ENCODE measurements at regions of chr6 and their contacts with region 1.

Region 1: GRCh38 chr6:108492131-108492766 is 68.5 kb upstream of the FOXO3 start:
- DNase-seq: peak; percentile 57 to 68 (median 64)
- H3K4me3 ChIP-seq: no peak overlapping the region
- H3K27ac ChIP-seq: no peak overlapping the region
- H3K4me1 ChIP-seq: no peaks in the 10 kb centered on the region
- H3K27me3 ChIP-seq: no peaks in the 10 kb centered on the region

Region 2: GRCh38 chr6:108250240-108250866 is 241.9 kb before region 1 on chr6:
- CTCF ChIA-PET with region 1: interaction called, 32 read pairs
- POLR2A ChIA-PET with region 1: no interaction called
- DNase-seq: peak; percentile 49 to 66 (median 65)
- H3K4me3 ChIP-seq: no peak overlapping the region
- H3K27ac ChIP-seq: no peak overlapping the region
- H3K4me1 ChIP-seq: peaks cover 8 to 31% (median 23%) of the 10 kb centered on the region in 4 experiments
- H3K27me3 ChIP-seq: no peaks in the 10 kb centered on the region

Region 3: DNA sequence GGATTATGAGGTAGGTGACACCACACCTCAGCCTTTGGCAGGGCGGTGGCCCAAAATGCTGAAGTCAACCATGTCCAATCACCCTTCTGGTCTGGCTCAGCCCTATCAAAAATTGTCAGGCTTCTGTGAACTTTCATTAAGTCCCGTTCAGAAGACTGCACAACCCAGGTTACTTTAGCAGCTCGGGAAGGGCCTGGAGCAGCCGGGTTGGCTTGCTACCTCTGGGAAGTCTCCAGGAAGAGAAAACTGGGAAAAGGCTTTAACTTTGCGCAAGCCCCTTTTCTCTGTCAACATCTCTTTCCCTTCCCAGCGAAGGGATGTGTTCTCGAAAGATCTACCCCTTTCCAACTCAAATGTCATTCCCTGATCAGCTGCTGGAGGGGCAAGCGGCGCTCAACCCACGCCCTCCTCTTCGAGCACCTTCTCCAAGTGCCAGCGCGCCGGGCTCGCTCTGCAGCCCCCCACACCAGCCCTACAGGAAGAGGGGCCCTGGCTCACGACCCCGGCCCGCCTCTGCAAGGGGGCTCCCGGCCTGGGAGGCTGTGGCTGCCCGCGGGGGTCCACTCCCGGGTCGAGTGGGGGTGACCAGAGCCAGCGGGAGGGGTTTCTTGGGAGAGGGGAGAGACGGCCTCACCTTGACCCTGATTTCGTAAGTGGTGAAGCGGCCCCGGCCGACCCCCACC is 232.0 kb before region 1 on chr6:
- CTCF ChIA-PET with region 1: interaction called, 13 read pairs
- POLR2A ChIA-PET with region 1: no interaction called
- DNase-seq: peak; percentile 25 to 63 (median 42)
- H3K4me3 ChIP-seq: peak overlapping the region; percentile 72 to 99 (median 91)
- H3K27ac ChIP-seq: peak overlapping the region; percentile 70 to 91
- H3K4me1 ChIP-seq: peaks cover 5 to 31% (median 22%) of the 10 kb centered on the region in 4 experiments
- H3K27me3 ChIP-seq: no peaks in the 10 kb centered on the region

Region 4: DNA sequence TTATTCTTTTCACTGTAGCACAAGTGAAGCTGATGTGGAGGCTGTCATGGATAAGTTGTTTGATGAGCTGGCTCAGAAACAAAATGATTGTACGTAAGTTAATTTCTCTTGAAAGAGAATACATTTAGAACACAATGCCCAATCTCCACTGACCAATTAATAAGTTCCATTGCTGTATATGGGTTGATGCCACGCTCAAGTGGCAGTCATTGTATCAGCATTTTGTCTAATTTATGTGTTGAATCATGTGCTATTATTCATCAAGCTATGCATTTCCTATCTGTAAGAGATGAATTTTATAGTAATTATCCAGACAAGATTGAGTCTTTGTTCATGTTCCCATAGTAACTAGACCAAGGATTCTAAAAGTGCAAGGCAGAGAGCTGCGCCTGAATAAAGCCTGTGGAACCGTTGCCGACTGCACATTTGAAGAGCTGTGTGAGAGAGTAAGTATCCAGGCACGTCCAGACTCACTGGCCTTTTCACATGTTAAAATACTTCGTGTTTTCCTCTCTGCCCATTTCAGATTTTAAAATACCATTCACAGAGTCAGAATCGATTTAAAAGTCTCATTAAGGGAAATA is 15.3 kb before region 1 on chr6:
- CTCF ChIA-PET with region 1: interaction called, 19 read pairs
- POLR2A ChIA-PET with region 1: no interaction called
- DNase-seq: no peak
- H3K4me3 ChIP-seq: no peak overlapping the region
- H3K27ac ChIP-seq: no peak overlapping the region
- H3K4me1 ChIP-seq: no peaks in the 10 kb centered on the region
- H3K27me3 ChIP-seq: no peaks in the 10 kb centered on the region